Transverse colon (tissue), 4 donors: ENCODE measurements at regions of chr1 and their contacts with region 1.

Region 1: DNA sequence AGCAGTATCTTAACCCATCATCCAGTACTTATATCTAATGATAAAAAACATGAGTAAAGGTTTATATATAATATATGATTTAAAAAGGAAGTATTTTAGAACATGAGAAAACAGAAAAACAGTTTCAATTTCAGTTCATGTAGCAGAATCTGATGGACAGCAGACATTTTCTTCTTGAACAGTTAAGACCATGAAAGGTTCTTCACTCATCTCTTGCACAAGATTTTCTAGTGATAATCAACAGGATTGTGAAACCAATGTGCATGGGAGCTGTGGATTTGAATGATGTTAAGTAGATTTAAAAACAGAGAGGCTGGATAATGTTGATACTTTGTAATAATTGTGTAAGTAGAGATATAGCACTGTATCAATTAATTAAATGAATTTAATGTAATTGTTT is 1297.6 kb downstream of the BRINP3 start:
- DNase-seq: no peak
- H3K4me3 ChIP-seq: no peak overlapping the region
- H3K27ac ChIP-seq: no peak overlapping the region
- H3K4me1 ChIP-seq: no peaks in the 10 kb centered on the region
- H3K27me3 ChIP-seq: no peaks in the 10 kb centered on the region
- CTCF ChIP-seq: no peak
- EP300 ChIP-seq: no peak
- POLR2A ChIP-seq: no peak

Region 2: DNA sequence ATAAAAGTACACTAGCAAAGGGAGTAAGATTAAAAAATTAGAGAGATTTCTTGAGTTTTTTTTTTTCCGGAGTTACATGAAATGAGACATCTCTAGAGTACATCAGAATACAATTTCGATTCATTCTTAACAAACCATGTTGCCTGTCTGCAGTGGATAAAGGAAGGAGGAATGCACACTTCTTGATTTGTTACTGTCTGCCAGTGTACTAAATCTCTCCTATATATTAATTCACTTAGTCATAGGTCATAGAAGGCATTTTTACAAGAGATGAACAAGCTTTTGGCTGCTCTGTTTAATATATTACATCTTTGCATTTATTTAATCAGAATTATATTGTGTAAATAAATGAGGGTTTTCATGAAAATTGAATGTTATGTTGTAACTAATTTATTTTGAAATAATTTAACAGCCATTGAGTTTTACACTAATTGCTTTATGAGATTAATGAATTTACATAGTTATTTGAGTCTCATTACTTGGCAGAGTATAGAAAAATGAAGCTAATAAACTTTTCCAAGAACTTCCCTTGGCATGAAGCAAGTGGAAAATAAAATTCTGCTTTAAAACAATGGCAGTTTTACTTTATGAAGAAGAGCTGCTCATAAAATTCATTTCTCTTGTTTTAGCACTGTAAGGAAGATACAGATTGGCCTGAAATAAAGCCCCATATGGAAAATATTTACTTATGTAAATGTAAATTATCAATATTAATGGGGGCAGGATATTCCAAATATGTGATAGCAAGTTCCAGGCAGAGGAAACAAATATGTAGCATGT is 12.9 kb after region 1 on chr1:
- in situ Hi-C with region 1: no loop called
- intact Hi-C with region 1: loop called (anchors 1 kb)
- DNase-seq: no peak
- H3K4me3 ChIP-seq: no peak overlapping the region
- H3K27ac ChIP-seq: no peak overlapping the region
- H3K4me1 ChIP-seq: peaks cover 0 to 3% (median 0%) of the 10 kb centered on the region in 4 donors
- H3K27me3 ChIP-seq: no peaks in the 10 kb centered on the region
- CTCF ChIP-seq: no peak
- EP300 ChIP-seq: no peak
- POLR2A ChIP-seq: no peak